ENCODE measurements at regions of chr4 and their contacts with region 1.

Region 1: GRCh38 chr4:174631901-174632758 is 109.8 kb upstream of the HPGD start:
- DNase-seq: no peak
- ATAC-seq: peak; percentile 77
- H3K4me3 ChIP-seq: no peak overlapping the region
- H3K27ac ChIP-seq: no peak overlapping the region
- H3K4me1 ChIP-seq: no peaks in the 10 kb centered on the region
- H3K27me3 ChIP-seq: no peaks in the 10 kb centered on the region
- CTCF ChIP-seq: peak; percentile 74

Region 2: DNA sequence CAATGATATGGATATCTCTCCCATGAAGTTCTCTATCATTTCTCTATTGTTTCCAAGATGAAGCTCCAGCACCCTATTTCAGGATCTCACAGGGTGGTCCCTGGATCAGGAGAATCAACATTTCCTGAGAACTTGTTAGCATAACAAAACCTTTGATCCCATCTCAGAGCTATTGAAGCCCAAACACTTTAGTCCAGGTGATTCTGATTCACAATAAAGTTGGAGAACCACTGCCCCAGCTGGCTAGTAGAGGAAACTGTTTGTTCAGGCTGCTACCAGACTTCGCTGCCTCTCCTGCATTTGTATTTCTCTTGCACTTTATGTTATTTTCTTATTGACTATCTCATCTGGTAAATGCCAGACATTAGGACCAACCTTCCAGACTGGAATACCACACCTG is 283.0 kb before region 1 on chr4:
- intact Hi-C with region 1: no loop called
- DNase-seq: no peak
- ATAC-seq: no peak
- H3K4me3 ChIP-seq: no peak overlapping the region
- H3K27ac ChIP-seq: no peak overlapping the region
- H3K4me1 ChIP-seq: no peaks in the 10 kb centered on the region
- H3K27me3 ChIP-seq: no peaks in the 10 kb centered on the region
- CTCF ChIP-seq: no peak

Region 3: GRCh38 chr4:174377613-174378012 is 254.5 kb before region 1 on chr4:
- intact Hi-C with region 1: loop called (anchors 10 kb)
- DNase-seq: no peak
- ATAC-seq: peak; percentile 32
- H3K4me3 ChIP-seq: no peak overlapping the region
- H3K27ac ChIP-seq: no peak overlapping the region
- H3K4me1 ChIP-seq: no peaks in the 10 kb centered on the region
- H3K27me3 ChIP-seq: no peaks in the 10 kb centered on the region
- CTCF ChIP-seq: no peak

Region 4: DNA sequence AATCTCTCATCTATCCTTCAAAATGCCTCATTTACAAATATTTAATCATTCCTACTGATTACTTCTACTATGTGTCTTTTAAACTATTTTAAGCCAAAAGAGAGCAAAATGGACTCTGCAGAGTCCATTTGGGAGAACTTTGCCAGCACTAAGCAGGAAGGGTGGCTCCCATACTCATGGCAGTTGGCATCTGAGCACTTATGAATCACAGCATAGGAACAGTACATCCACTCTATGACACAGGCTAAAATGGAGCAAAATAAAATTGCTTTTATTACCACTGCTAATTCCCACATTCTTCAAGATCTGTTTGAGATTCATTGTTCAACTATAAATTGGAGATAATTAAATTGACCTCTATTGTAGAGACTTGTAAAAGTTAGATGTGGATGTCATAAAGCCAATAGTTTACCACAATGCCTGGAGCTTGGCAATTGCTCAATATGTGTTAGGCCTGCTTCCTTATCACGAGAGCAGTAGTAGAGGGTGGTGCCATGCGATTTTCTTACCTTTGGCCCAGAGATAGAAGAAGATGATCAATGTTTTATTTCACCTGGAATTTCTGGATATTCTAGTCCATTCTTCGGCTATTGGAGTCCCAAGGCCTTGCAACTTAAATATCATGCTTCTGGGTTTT is 128.9 kb before region 1 on chr4:
- intact Hi-C with region 1: no loop called
- DNase-seq: no peak
- ATAC-seq: peak; percentile 44
- H3K4me3 ChIP-seq: no peak overlapping the region
- H3K27ac ChIP-seq: no peak overlapping the region
- H3K4me1 ChIP-seq: no peaks in the 10 kb centered on the region
- H3K27me3 ChIP-seq: no peaks in the 10 kb centered on the region
- CTCF ChIP-seq: no peak

Region 5: DNA sequence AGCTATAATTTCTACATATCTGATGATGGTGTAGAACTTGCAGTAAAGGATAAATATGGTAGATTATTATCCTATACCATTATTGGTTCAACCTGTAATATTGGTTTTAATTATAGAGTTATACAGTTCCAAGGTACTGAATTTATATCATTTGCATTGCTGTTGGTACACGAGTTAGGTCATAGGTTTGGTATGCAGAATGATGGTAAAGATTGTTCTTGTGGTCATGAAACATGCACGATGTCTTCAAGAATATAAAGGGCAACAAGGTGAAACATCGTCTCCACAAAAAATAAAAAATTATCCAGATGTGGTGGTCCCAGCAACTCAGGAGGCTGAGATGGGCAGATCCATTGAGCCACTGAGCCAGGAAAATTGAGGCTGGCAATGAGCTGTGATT is 385.6 kb after region 1 on chr4:
- intact Hi-C with region 1: no loop called
- DNase-seq: no peak
- ATAC-seq: no peak
- H3K4me3 ChIP-seq: no peak overlapping the region
- H3K27ac ChIP-seq: no peak overlapping the region
- H3K4me1 ChIP-seq: no peaks in the 10 kb centered on the region
- H3K27me3 ChIP-seq: no peaks in the 10 kb centered on the region
- CTCF ChIP-seq: no peak

Measured in upper lobe of right lung (tissue), 1 donor.